Caco-2 (cell line): ENCODE measurements at regions of chr3 and their contacts with region 1.

Region 1: DNA sequence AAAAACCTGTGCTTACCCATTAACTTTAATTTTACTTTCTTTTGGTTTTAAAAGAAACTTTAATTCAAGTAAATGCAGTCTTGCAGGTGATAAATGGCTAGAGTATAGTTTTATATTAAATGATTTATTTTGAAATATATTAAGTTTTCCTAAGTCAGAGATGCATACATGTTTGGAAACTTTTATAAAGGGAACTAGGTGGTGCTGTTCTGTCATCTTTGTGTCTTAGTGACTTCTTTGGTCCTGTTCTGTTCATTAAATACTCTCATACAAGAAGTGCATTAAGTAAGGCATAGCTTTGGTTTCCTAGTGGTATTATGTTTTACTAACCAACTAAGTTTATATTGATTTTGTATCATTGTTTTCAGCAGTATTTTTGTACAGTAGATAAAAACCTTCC is 15.6 kb downstream of the CADM2 start:
- DNase-seq: no peak
- H3K4me3 ChIP-seq: no peak overlapping the region
- H3K4me3 Mint-ChIP-seq: no peak overlapping the region
- H3K27ac Mint-ChIP-seq: no peak overlapping the region
- H3K4me1 ChIP-seq: no peaks in the 10 kb centered on the region
- H3K4me1 Mint-ChIP-seq: no peaks in the 10 kb centered on the region
- H3K27me3 ChIP-seq: no peaks in the 10 kb centered on the region
- H3K27me3 Mint-ChIP-seq: no peaks in the 10 kb centered on the region
- CTCF ChIP-seq: no peak

Region 2: DNA sequence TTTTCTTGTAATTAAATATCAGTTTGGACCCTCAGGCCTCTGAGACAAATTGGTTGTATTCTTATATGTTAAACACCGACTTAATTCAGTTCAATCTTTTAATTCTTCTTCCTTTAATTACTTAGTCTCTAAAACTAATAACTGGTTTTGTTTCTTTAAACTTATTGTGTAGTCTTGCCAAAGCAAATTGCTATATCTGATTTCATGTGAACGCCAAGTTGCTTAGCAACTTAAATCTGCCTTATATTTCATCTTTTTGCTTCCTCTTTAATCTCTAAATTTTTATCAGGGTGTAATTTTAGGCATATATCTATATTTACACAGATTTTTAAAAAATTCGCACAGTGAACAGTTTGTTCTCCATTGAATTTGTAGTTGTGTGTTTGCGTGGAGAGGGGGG is 66.7 kb after region 1 on chr3:
- CTCF ChIA-PET with region 1: no interaction called
- POLR2A ChIA-PET with region 1: no interaction called
- intact Hi-C with region 1: no loop called
- DNase-seq: no peak
- H3K4me3 ChIP-seq: no peak overlapping the region
- H3K4me3 Mint-ChIP-seq: no peak overlapping the region
- H3K27ac Mint-ChIP-seq: no peak overlapping the region
- H3K4me1 ChIP-seq: no peaks in the 10 kb centered on the region
- H3K4me1 Mint-ChIP-seq: no peaks in the 10 kb centered on the region
- H3K27me3 ChIP-seq: no peaks in the 10 kb centered on the region
- H3K27me3 Mint-ChIP-seq: no peaks in the 10 kb centered on the region
- CTCF ChIP-seq: no peak

Region 3: DNA sequence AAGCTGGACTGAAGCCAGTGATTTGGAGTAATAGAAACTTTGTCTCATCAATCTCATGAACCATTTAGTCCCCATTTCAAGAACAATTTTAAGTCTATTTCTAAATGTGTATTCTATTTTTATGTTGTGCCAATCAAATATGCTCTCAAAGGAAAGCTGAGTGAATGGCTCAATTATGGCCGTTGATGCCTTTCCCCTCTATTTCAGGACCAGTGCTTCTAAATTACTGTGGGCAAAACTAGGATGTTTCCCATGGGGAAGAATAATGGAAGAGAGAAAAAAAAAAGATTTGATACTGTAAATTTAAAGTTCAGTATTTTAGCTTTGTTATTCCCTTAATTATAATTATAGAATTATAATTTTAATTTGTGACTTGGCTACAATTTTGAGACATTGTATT is 94.6 kb after region 1 on chr3:
- CTCF ChIA-PET with region 1: no interaction called
- POLR2A ChIA-PET with region 1: no interaction called
- intact Hi-C with region 1: no loop called
- DNase-seq: no peak
- H3K4me3 ChIP-seq: no peak overlapping the region
- H3K4me3 Mint-ChIP-seq: no peak overlapping the region
- H3K27ac Mint-ChIP-seq: no peak overlapping the region
- H3K4me1 ChIP-seq: no peaks in the 10 kb centered on the region
- H3K4me1 Mint-ChIP-seq: no peaks in the 10 kb centered on the region
- H3K27me3 ChIP-seq: no peaks in the 10 kb centered on the region
- H3K27me3 Mint-ChIP-seq: no peaks in the 10 kb centered on the region
- CTCF ChIP-seq: no peak

Region 4: GRCh38 chr3:85342915-85343314 is 368.6 kb after region 1 on chr3:
- CTCF ChIA-PET with region 1: no interaction called
- POLR2A ChIA-PET with region 1: no interaction called
- intact Hi-C with region 1: loop called (anchors 1 kb)
- DNase-seq: peak; percentile 23 to 35
- H3K4me3 ChIP-seq: no peak overlapping the region
- H3K4me3 Mint-ChIP-seq: no peak overlapping the region
- H3K27ac Mint-ChIP-seq: no peak overlapping the region
- H3K4me1 ChIP-seq: no peaks in the 10 kb centered on the region
- H3K4me1 Mint-ChIP-seq: no peaks in the 10 kb centered on the region
- H3K27me3 ChIP-seq: no peaks in the 10 kb centered on the region
- H3K27me3 Mint-ChIP-seq: no peaks in the 10 kb centered on the region
- CTCF ChIP-seq: peak in 1 of 2 experiments; percentile 46